OCI-LY7 (cell line): ENCODE measurements at regions of chr20 and their contacts with region 1.

Region 1: GRCh38 chr20:58407966-58408557 is 19.0 kb downstream of the VAPB start:
- DNase-seq: peak; percentile 33
- H3K4me3 ChIP-seq: peak overlapping the region; percentile 17
- H3K27ac ChIP-seq: peak overlapping the region; percentile 41
- H3K4me1 ChIP-seq: peaks cover 44% of the 10 kb centered on the region
- CTCF ChIP-seq: no peak

Region 2: GRCh38 chr20:58017237-58017969 is 390.7 kb before region 1 on chr20:
- CTCF ChIA-PET with region 1: no interaction called
- POLR2A ChIA-PET with region 1: no interaction called
- intact Hi-C with region 1: no loop called
- DNase-seq: no peak
- H3K4me3 ChIP-seq: no peak overlapping the region
- H3K27ac ChIP-seq: no peak overlapping the region
- H3K4me1 ChIP-seq: no peaks in the 10 kb centered on the region
- CTCF ChIP-seq: no peak

Region 3: DNA sequence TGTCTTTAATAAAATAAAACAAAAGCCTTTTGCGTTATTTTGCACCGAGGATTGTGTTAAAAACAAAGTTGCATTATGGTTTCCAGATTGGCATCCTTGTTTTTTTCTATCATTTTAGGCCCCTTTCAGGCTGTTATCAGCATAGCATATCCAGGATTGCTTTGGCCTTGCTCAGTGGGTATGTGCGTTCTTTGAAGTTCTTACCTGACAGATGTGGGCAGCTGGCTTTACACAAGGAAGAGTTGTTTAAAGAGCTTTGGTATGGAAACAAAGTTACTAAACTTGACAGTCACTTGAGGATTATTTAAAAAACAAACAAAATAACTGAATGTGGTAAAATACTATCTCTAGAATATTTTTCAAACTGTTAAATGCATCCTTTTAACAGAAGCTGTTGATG is 12.5 kb before region 1 on chr20:
- CTCF ChIA-PET with region 1: no interaction called
- POLR2A ChIA-PET with region 1: interaction called, 10 read pairs
- intact Hi-C with region 1: no loop called
- DNase-seq: no peak
- H3K4me3 ChIP-seq: no peak overlapping the region
- H3K27ac ChIP-seq: no peak overlapping the region
- H3K4me1 ChIP-seq: peaks cover 31% of the 10 kb centered on the region
- CTCF ChIP-seq: no peak

Region 4: GRCh38 chr20:58618351-58619076 is 210.5 kb after region 1 on chr20:
- CTCF ChIA-PET with region 1: no interaction called
- POLR2A ChIA-PET with region 1: no interaction called
- intact Hi-C with region 1: no loop called
- DNase-seq: no peak
- H3K4me3 ChIP-seq: no peak overlapping the region
- H3K27ac ChIP-seq: no peak overlapping the region
- H3K4me1 ChIP-seq: no peaks in the 10 kb centered on the region
- CTCF ChIP-seq: no peak